HepG2 (cell line): ENCODE measurements at regions of chr3 and their contacts with region 1.

Region 1: GRCh38 chr3:38004415-38005076 is 14.0 kb downstream of the VILL start:
- DNase-seq: peak; percentile 88
- ATAC-seq: peak; percentile 84
- H3K4me3 ChIP-seq: peak overlapping the region; percentile 43 to 77 (median 59)
- H3K27ac ChIP-seq: peak overlapping the region; percentile 76
- H3K4me1 ChIP-seq: peaks cover 63% of the 10 kb centered on the region
- H3K27me3 ChIP-seq: peaks cover 0 to 10% of the 10 kb centered on the region in 2 experiments; a peak in 2 of 5 replicates
- CTCF ChIP-seq: peak; percentile 97
- EP300 ChIP-seq: no peak
- POLR2A ChIP-seq: no peak
- RAD21 ChIP-seq: peak; percentile 31; the same call in 1 of the 2 replicates

Region 2: GRCh38 chr3:37855363-37855970 is 149.1 kb before region 1 on chr3:
- CTCF ChIA-PET with region 1: interaction called, 4 read pairs
- POLR2A ChIA-PET with region 1: no interaction called
- in situ Hi-C with region 1: loop called (anchors 5 kb)
- intact Hi-C with region 1: loop called (anchors 1 kb)
- DNase-seq: peak; percentile 53
- ATAC-seq: peak; percentile 74
- H3K4me3 ChIP-seq: no peak overlapping the region
- H3K27ac ChIP-seq: no peak overlapping the region
- H3K4me1 ChIP-seq: peaks cover 12% of the 10 kb centered on the region
- H3K27me3 ChIP-seq: no peaks in the 10 kb centered on the region
- CTCF ChIP-seq: peak; percentile 98
- EP300 ChIP-seq: no peak
- POLR2A ChIP-seq: no peak
- RAD21 ChIP-seq: peak; percentile 90

Region 3: GRCh38 chr3:37862219-37862902 is 142.2 kb before region 1 on chr3:
- CTCF ChIA-PET with region 1: no interaction called
- POLR2A ChIA-PET with region 1: no interaction called
- in situ Hi-C with region 1: loop called (anchors 5 kb)
- intact Hi-C with region 1: loop called (anchors 2 kb)
- DNase-seq: no peak
- ATAC-seq: peak; percentile 6; the same call in 2 of the 3 replicates
- H3K4me3 ChIP-seq: peak overlapping the region; percentile 77 to 96 (median 93)
- H3K27ac ChIP-seq: peak overlapping the region; percentile 71
- H3K4me1 ChIP-seq: peaks cover 53% of the 10 kb centered on the region
- H3K27me3 ChIP-seq: no peaks in the 10 kb centered on the region; a peak in 1 of 5 replicates
- CTCF ChIP-seq: no peak
- EP300 ChIP-seq: no peak
- POLR2A ChIP-seq: no peak
- RAD21 ChIP-seq: no peak

Region 4: GRCh38 chr3:37907906-37908305 is 96.6 kb before region 1 on chr3:
- CTCF ChIA-PET with region 1: no interaction called
- POLR2A ChIA-PET with region 1: interaction called, 4 read pairs
- in situ Hi-C with region 1: no loop called
- intact Hi-C with region 1: loop called (anchors 2 kb)
- DNase-seq: peak; percentile 95
- ATAC-seq: peak; percentile 2; the same call in 1 of the 3 replicates
- H3K4me3 ChIP-seq: no peak overlapping the region; a peak in 1 of 6 replicates
- H3K27ac ChIP-seq: peak overlapping the region; percentile 88
- H3K4me1 ChIP-seq: peaks cover 100% of the 10 kb centered on the region
- H3K27me3 ChIP-seq: no peaks in the 10 kb centered on the region
- CTCF ChIP-seq: no peak
- EP300 ChIP-seq: peak in 1 of 2 experiments; percentile 67; a peak in 2 of 4 replicates
- POLR2A ChIP-seq: no peak
- RAD21 ChIP-seq: no peak

Region 5: GRCh38 chr3:37974121-37975083 is 30.1 kb before region 1 on chr3:
- CTCF ChIA-PET with region 1: interaction called, 21 read pairs
- POLR2A ChIA-PET with region 1: interaction called, 6 read pairs
- in situ Hi-C with region 1: no loop called
- intact Hi-C with region 1: loop called (anchors 1 kb)
- DNase-seq: peak; percentile 56
- ATAC-seq: peak; percentile 93
- H3K4me3 ChIP-seq: no peak overlapping the region
- H3K27ac ChIP-seq: no peak overlapping the region
- H3K4me1 ChIP-seq: peaks cover 22% of the 10 kb centered on the region
- H3K27me3 ChIP-seq: no peaks in the 10 kb centered on the region
- CTCF ChIP-seq: peak; percentile 88
- EP300 ChIP-seq: no peak
- POLR2A ChIP-seq: no peak
- RAD21 ChIP-seq: 0 out of 2 replicates have a peak, but pooled peaks have one; percentile 44

Region 6: DNA sequence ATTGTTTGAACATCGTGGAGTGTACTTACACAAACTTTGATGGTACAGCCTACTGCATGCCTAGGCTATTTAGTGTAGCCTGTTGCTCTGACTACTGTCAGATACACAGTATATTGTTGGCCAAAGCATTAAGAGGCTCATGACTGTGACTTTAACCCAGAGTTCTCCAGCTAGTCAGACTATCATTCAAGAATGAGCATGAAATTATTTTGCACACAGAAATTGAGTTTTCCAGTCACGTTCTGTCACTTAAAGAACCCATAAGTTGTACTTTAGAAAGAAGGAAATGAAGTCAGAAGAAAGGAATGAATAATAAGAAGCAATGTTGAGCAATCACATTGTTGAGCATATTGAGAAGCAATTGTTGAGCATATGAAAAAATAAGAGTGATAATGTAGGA is 223.4 kb after region 1 on chr3:
- CTCF ChIA-PET with region 1: no interaction called
- POLR2A ChIA-PET with region 1: no interaction called
- in situ Hi-C with region 1: no loop called
- intact Hi-C with region 1: no loop called
- DNase-seq: no peak
- ATAC-seq: no peak
- H3K4me3 ChIP-seq: no peak overlapping the region
- H3K27ac ChIP-seq: no peak overlapping the region
- H3K4me1 ChIP-seq: no peaks in the 10 kb centered on the region
- H3K27me3 ChIP-seq: no peaks in the 10 kb centered on the region
- CTCF ChIP-seq: no peak
- EP300 ChIP-seq: no peak
- POLR2A ChIP-seq: no peak
- RAD21 ChIP-seq: no peak

Region 7: DNA sequence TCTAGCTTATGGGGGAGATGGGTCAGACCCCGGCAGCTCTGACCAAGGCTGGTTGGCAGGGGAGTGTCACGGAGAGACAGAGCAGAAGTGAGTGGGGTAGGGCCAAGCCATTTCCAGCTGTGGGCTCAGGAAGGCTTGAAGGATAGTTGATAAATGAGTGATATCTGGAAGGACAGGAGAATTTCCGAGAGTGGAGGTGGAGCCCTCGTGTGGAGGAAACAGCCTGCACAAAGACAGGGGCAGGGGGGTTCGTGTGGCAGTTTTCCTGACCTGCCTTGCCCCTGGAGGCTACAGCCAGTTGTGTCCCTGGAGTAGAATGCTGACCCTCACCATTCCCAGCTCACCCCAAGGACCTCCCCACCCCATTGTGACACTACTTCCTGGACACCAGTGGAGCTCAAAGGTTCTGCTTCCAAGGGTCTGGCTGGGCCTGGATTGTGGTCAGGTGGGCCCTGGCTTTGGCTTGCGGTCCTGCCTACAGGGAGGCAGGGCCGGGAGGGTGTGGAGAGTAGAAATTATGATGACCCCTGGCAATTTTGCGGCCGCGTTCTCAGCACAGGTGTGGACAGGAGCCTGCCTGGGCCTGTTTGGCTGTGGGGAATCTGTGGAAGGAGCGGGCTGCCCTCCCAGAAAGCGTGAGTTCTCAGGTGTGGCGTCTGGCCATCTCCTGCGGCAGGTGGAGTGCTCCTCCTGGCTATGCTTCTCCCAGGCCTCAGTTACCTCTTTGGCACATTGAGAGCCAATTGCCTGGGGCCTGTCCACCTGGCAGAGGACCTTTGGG is 277.5 kb after region 1 on chr3 and contains the start of gene SLC22A14:
- CTCF ChIA-PET with region 1: interaction called, 3 read pairs
- POLR2A ChIA-PET with region 1: no interaction called
- in situ Hi-C with region 1: no loop called
- intact Hi-C with region 1: loop called (anchors 1 kb)
- DNase-seq: peak; percentile 16
- ATAC-seq: peak; percentile 89
- H3K4me3 ChIP-seq: no peak within 1 kb of the TSS
- H3K27ac ChIP-seq: no peak within 1 kb of the TSS
- H3K4me1 ChIP-seq: no peaks in the 10 kb centered on the region
- H3K27me3 ChIP-seq: peaks cover 0 to 19% of the 10 kb centered on the region in 2 experiments; a peak in 3 of 5 replicates
- CTCF ChIP-seq: peak; percentile 65
- EP300 ChIP-seq: no peak
- POLR2A ChIP-seq: no peak
- RAD21 ChIP-seq: peak; percentile 25; the same call in 1 of the 2 replicates
- total RNA-seq, gene SLC22A14: not detected in 2 replicates